ENCODE measurements at regions of chr2 and their contacts with region 1.

Region 1: DNA sequence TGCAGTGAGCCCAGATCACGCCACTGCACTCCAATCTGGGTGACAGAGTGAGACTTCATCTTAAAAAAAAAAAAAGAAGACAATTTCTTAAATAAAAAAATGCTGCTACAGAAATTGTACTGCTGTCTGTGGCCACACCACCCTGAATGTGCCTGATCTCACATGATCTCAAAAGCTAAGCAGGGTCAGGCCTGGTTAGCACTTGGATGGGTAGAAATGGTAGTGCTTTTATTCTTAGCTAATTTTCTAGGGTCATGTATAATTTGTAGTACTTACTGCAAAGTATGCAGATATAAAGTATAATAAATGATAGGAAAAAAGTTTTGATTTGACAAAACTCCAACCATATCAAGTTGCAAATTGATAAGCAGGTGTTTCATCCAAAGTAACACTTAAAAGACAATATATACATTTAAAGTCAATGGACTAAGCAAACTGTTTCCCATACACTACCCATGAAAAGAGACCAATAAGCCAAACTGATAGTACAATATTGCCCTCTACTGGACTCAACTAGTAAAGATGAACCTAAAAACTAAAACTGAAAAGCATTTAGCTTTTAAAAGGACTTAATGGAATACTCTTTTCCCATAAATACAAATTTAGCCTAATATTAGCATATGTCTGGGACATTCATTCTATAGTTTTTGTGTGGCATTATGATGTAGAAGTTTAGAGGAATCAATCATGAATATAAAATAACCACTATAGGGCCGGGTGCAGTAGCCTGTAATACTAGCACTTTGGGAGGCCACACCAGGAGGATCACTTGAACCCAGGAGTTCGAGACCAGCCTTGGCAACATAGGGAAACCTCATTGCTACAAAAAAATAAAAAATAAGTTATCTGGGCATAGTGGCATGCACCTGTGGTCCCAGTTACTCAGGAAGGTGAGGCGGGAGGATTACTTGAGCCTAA is 18.6 kb upstream of the PEX13 start:
- DNase-seq: peak; percentile 46 to 67
- ATAC-seq: peak; percentile 65 to 86; a peak in 4 of 6 replicates
- H3K4me3 ChIP-seq: no peak overlapping the region
- H3K27ac ChIP-seq: no peak overlapping the region
- H3K4me1 ChIP-seq: no peaks in the 10 kb centered on the region
- CTCF ChIP-seq: peak; percentile 96
- EP300 ChIP-seq: no peak
- POLR2A ChIP-seq: no peak
- RAD21 ChIP-seq: peak; percentile 95 to 96

Region 2: DNA sequence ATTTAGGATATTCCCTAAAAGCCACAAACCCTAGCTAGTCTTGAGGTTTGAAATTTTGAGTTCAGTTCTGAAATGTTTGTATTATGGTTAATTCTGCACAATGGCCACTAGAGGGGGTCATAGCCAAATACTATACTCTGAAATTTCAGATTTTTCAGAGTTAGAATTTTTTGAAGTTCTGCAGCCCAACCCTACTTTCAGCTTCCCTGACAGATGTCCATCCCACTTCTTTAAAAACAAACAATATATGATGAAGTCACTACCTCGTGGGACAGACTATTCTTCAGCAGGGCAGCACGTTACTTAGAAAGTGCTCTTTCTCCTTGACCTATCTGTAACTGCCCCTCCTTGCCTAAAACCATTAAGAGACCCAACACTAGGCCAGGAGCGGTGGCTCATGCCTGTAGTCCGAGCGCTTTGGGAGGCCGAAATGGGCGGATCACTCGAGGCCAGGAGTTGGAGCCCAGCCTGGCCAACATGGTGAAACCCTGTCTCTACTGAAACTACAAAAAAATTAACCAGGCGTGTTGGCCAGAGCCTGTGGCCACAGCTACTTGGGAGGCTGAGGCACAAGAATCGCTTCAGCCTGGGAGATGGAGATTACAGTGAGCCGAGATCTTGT is 291.0 kb before region 1 on chr2:
- CTCF ChIA-PET with region 1: interaction called, 135 read pairs
- POLR2A ChIA-PET with region 1: no interaction called
- DNase-seq: peak; percentile 36 to 47
- ATAC-seq: peak; percentile 60 to 75
- H3K4me3 ChIP-seq: no peak overlapping the region
- H3K27ac ChIP-seq: no peak overlapping the region
- H3K4me1 ChIP-seq: no peaks in the 10 kb centered on the region
- CTCF ChIP-seq: peak; percentile 94
- EP300 ChIP-seq: no peak
- POLR2A ChIP-seq: no peak
- RAD21 ChIP-seq: peak; percentile 82 to 84

Region 3: GRCh38 chr2:60794277-60794863 is 204.5 kb before region 1 on chr2:
- CTCF ChIA-PET with region 1: interaction called, 54 read pairs
- POLR2A ChIA-PET with region 1: no interaction called
- DNase-seq: peak; percentile 35 to 50
- ATAC-seq: peak in 1 of 2 experiments; percentile 62; a peak in 1 of 6 replicates
- H3K4me3 ChIP-seq: no peak overlapping the region
- H3K27ac ChIP-seq: no peak overlapping the region
- H3K4me1 ChIP-seq: no peaks in the 10 kb centered on the region
- CTCF ChIP-seq: peak; percentile 74
- EP300 ChIP-seq: no peak
- POLR2A ChIP-seq: no peak
- RAD21 ChIP-seq: peak; percentile 73 to 84

Region 4: DNA sequence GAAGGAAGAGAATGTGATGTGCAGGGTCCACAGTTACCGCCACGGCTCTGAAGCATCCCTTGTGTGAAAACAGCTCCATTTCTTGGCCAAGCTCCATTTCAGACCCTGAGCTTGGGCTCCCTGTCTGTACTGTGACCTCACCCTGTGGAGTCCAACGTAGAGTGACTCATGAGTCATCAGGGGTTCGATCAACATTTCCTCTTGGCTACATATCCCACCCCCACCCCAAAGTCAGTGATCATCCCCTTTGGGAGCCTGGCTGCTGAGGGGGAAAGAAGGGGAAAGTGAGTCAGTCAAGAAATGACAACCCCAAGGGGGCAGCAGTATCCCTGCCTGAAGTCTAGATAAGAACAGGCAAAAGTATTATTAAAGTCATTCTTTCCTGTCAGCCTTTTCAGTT is 180.6 kb before region 1 on chr2:
- CTCF ChIA-PET with region 1: interaction called, 13 read pairs
- POLR2A ChIA-PET with region 1: no interaction called
- DNase-seq: peak in 1 of 2 experiments; percentile 12
- ATAC-seq: peak in 1 of 2 experiments; percentile 29; a peak in 2 of 6 replicates
- H3K4me3 ChIP-seq: no peak overlapping the region
- H3K27ac ChIP-seq: no peak overlapping the region
- H3K4me1 ChIP-seq: 0 out of 3 replicates have a peak, but pooled peaks cover 4% of the 10 kb centered on the region
- CTCF ChIP-seq: peak; percentile 21; the same call in 1 of the 3 replicates
- EP300 ChIP-seq: no peak
- POLR2A ChIP-seq: no peak
- RAD21 ChIP-seq: peak in 1 of 2 experiments; percentile 29; a peak in 2 of 5 replicates

Region 5: GRCh38 chr2:60839126-60839813 is 159.6 kb before region 1 on chr2:
- CTCF ChIA-PET with region 1: interaction called, 11 read pairs
- POLR2A ChIA-PET with region 1: no interaction called
- DNase-seq: no peak
- ATAC-seq: no peak
- H3K4me3 ChIP-seq: no peak overlapping the region
- H3K27ac ChIP-seq: no peak overlapping the region
- H3K4me1 ChIP-seq: no peaks in the 10 kb centered on the region
- CTCF ChIP-seq: no peak
- EP300 ChIP-seq: no peak
- POLR2A ChIP-seq: no peak
- RAD21 ChIP-seq: no peak

Region 6: GRCh38 chr2:60976875-60977561 is 21.9 kb before region 1 on chr2:
- CTCF ChIA-PET with region 1: interaction called, 10 read pairs
- POLR2A ChIA-PET with region 1: no interaction called
- DNase-seq: no peak
- ATAC-seq: no peak
- H3K4me3 ChIP-seq: no peak overlapping the region
- H3K27ac ChIP-seq: no peak overlapping the region
- H3K4me1 ChIP-seq: no peaks in the 10 kb centered on the region
- CTCF ChIP-seq: no peak
- EP300 ChIP-seq: no peak
- POLR2A ChIP-seq: no peak
- RAD21 ChIP-seq: no peak